MCF 10A (cell line): ENCODE measurements at regions of chr1 and their contacts with region 1.

Region 1: DNA sequence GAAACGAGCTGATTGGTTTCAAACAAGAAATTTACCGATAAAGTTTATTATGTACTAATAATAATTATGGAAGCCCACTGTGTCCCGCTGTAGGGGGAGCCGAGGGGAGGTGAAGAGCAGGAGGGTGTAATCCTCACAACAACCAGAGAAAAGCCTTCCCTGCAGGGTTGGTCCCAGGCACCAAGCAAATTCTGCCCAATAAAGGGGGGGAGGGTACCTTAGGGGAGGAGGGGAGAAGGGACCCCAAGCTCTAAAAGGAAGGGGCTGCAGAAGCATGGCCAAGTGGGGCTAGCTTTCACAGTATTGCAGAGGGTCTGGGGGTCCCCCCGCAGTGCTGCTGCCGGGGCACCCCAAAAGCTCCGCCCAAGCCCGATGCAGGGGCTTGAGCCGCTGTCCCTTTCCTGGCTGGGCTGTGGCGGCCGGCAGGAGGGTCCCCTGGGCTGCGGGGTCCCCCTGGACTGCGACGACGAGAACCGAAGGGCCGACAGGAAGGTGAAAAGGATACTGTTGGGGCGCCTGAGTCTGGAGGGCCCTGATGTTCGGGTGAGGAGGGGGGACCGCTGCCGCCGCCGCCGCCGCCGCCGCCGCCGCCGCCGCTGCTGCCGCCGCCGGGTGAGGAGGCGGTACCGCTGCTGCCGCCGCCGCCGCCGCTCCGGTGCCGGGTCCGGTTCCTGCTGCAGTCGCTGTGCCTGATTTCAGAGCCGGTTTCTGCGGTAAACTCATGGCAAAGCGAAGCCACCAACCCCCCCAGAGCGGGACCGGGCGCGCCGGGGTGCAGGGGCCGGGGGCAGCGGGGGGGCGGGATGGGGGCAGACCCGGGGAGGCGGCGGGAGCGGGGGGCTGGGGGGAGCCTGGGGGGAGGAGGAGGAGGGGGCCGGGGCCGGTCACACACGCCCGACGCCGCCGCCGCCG is 771 bp downstream of the EIF4G3 start:
- DNase-seq: peak; percentile 25
- H3K4me3 Mint-ChIP-seq: peak overlapping the region; percentile 84
- H3K27ac Mint-ChIP-seq: peak overlapping the region; percentile 90
- H3K4me1 Mint-ChIP-seq: peaks cover 26% of the 10 kb centered on the region
- H3K27me3 Mint-ChIP-seq: no peaks in the 10 kb centered on the region
- CTCF ChIP-seq: no peak

Region 2: GRCh38 chr1:20682571-20683236 is 493.2 kb before region 1 on chr1:
- CTCF ChIA-PET with region 1: no interaction called
- POLR2A ChIA-PET with region 1: no interaction called
- intact Hi-C with region 1: no loop called
- DNase-seq: no peak
- H3K4me3 Mint-ChIP-seq: no peak overlapping the region
- H3K27ac Mint-ChIP-seq: no peak overlapping the region
- H3K4me1 Mint-ChIP-seq: no peaks in the 10 kb centered on the region
- H3K27me3 Mint-ChIP-seq: no peaks in the 10 kb centered on the region
- CTCF ChIP-seq: no peak

Region 3: DNA sequence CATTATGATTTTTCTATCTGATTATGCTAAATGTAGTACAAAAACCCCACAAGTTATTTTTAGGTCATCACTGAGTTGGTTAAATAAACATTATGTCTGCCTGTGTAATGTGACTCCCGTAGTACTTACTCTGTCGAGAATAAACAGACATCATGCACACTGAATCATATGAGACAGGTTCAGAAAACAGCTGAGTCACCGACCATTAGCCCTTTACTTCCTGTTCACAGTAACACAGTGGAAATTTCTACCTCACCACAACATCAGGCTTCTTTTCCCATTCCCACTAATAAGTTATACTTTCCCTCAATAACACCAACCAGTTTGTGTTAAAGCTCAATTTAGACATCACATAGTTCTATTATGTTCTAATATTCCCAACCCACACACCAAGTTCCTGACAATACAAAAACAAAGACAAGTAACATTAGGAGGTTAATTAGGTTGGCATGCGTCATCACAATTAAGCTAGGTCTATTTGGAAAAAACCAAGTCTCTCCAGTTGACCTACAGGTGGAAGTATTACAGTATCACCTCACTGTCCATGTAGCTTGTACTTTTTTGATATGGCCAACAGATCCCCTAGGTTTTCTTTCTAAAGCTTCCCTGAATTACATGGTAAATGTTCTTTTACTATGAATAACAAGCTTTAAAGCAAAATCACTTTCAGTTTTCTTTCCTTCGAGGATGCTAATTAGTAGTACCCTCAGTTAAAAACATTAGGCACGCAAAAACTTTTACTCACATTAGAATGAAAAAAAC is 153.5 kb before region 1 on chr1:
- CTCF ChIA-PET with region 1: interaction called, 3 read pairs
- POLR2A ChIA-PET with region 1: interaction called, 19 read pairs
- intact Hi-C with region 1: no loop called
- DNase-seq: peak; percentile 95
- H3K4me3 Mint-ChIP-seq: peak overlapping the region; percentile 48
- H3K27ac Mint-ChIP-seq: peak overlapping the region; percentile 99
- H3K4me1 Mint-ChIP-seq: peaks cover 24% of the 10 kb centered on the region
- H3K27me3 Mint-ChIP-seq: no peaks in the 10 kb centered on the region
- CTCF ChIP-seq: no peak

Region 4: DNA sequence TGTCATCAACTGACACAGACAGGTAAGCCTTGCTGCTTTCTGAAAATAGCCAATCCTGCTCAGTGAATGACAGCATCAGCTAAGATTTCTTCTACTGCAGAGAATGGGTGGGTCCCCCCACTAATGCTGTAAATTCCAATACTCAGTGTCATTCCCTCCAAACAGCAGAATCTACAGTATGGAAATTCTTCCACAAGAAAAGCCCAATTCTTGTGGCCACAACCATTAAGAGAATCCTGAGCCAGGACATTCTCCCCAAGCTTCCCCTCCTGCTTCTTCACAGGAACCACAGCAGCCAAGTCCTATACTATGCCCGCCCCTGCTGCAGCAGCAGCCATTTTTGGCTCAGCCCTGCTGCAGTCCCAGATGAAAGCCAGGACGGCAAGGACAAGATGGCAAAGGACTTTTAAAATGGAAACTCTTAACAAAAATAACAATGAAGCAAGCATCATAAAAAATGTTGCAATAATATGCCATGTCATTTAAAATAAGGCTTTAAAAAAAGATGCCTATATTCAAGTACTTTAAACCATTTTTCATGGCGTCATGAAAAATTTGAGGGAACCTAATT is 26.0 kb before region 1 on chr1:
- CTCF ChIA-PET with region 1: no interaction called
- POLR2A ChIA-PET with region 1: interaction called, 23 read pairs
- intact Hi-C with region 1: no loop called
- DNase-seq: peak; percentile 55
- H3K4me3 Mint-ChIP-seq: peak overlapping the region; percentile 56
- H3K27ac Mint-ChIP-seq: peak overlapping the region; percentile 80
- H3K4me1 Mint-ChIP-seq: peaks cover 11% of the 10 kb centered on the region
- H3K27me3 Mint-ChIP-seq: no peaks in the 10 kb centered on the region
- CTCF ChIP-seq: no peak

Region 5: DNA sequence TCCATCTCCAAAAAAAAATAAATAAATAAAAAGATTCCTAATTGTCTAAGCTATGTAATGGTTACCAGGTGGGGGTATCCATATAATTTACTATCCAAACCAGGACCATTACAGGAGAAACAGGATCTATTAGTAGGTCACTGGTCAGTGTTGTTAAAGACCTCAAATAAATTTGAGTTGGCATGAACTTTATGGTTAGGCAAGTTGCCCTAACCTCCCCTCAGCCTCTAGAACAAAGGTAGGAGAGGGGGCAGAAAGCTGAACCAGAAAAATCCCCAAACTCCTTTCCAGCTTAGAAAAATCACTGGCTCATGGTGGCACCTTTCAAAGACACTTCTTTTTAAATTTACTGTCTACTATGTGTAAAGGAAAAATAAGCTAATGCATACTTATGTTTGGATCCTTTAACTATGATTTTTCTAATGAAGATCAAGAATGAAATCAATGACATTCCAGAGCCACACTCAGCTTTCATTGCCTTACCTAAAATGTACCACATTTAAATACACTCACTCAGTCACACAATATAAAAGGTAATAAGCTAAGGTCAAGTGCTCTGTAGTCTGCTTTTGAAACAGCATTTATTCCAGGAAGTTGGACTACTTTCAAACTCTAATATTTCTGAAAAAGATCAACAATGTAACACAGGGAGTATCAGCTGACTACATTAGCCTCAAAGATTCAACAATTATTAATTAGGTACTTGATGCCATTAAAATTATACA is 13.0 kb before region 1 on chr1:
- CTCF ChIA-PET with region 1: no interaction called
- POLR2A ChIA-PET with region 1: interaction called, 23 read pairs
- intact Hi-C with region 1: no loop called
- DNase-seq: no peak
- H3K4me3 Mint-ChIP-seq: no peak overlapping the region
- H3K27ac Mint-ChIP-seq: peak overlapping the region; percentile 19
- H3K4me1 Mint-ChIP-seq: peaks cover 21% of the 10 kb centered on the region
- H3K27me3 Mint-ChIP-seq: no peaks in the 10 kb centered on the region
- CTCF ChIP-seq: no peak